Activated CD4-positive, alpha-beta memory T cell treated with anti-CD3 and anti-CD28 coated beads, Interleukin-2, amount 10 ng/mL, durations not matched to agents 7 days and 5 days (primary cell): ENCODE measurements at regions of chr14 and their contacts with region 1.

Region 1: GRCh38 chr14:24215495-24216344 is at the start of gene MDP1:
- DNase-seq: peak; percentile 92
- H3K4me3 Mint-ChIP-seq: peak within 1 kb of the TSS; percentile 88
- H3K27ac Mint-ChIP-seq: peak within 1 kb of the TSS; percentile 95
- H3K4me1 Mint-ChIP-seq: peaks cover 64% of the 10 kb centered on the region
- H3K27me3 Mint-ChIP-seq: no peaks in the 10 kb centered on the region
- total RNA-seq, gene MDP1: 13.5 to 17.0 TPM

Region 2: GRCh38 chr14:24141097-24141880 is 74.4 kb before region 1 on chr14 and contains the start of gene EMC9:
- CTCF ChIA-PET with region 1: interaction called, 5 read pairs
- POLR2A ChIA-PET with region 1: interaction called, 48 read pairs
- DNase-seq: peak; percentile 100
- H3K4me3 Mint-ChIP-seq: peak within 1 kb of the TSS; percentile 93
- H3K27ac Mint-ChIP-seq: peak within 1 kb of the TSS; percentile 92
- H3K4me1 Mint-ChIP-seq: peaks cover 73% of the 10 kb centered on the region
- H3K27me3 Mint-ChIP-seq: no peaks in the 10 kb centered on the region
- total RNA-seq, gene EMC9: 45.0 to 51.7 TPM

Region 3: DNA sequence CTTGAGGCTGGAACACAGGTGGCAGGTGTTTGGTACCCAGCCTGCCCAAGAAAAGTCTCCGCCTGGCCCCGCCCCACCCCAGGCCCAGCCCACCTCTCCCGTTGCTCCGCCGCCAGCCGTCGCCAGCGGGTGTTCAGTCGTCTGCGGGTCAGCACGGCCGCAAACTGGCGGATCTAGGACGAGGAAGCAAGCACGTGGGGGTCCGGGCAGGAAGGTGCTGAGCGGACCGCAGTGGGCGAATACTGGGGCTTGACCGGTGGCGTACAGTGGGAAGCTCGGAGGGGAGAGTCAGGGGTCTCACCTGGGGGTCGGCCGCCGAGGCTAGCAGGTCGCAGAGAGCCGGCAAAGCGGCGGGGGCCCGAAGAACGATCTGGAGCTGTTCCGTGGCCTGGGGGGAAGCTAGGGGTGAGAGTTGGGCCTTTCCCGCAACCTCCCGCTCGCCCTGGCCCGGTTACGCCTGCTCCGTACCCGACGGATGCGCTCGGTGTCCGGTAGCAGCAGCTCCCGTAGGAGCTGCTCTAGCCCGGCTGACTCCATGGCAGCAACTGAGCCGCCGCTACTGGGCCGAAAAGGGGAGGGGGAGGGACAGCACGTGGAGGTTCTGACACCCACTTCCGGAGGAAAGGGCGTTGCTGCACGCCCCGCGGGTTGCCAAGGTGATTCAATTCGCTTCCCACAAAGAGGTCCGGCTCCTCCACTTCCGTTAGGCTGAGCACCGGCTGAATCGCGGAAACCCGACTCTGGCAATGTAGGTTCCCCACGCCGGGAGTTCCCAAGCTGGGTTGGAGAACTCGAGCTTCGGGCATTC is 27.3 kb before region 1 on chr14 and contains the start of gene IPO4:
- CTCF ChIA-PET with region 1: interaction called, 9 read pairs
- POLR2A ChIA-PET with region 1: interaction called, 186 read pairs
- DNase-seq: peak; percentile 96
- H3K4me3 Mint-ChIP-seq: peak within 1 kb of the TSS; percentile 81
- H3K27ac Mint-ChIP-seq: peak within 1 kb of the TSS; percentile 79
- H3K4me1 Mint-ChIP-seq: peaks cover 59% of the 10 kb centered on the region
- H3K27me3 Mint-ChIP-seq: no peaks in the 10 kb centered on the region
- total RNA-seq, gene IPO4: 24.0 to 26.2 TPM

Region 4: DNA sequence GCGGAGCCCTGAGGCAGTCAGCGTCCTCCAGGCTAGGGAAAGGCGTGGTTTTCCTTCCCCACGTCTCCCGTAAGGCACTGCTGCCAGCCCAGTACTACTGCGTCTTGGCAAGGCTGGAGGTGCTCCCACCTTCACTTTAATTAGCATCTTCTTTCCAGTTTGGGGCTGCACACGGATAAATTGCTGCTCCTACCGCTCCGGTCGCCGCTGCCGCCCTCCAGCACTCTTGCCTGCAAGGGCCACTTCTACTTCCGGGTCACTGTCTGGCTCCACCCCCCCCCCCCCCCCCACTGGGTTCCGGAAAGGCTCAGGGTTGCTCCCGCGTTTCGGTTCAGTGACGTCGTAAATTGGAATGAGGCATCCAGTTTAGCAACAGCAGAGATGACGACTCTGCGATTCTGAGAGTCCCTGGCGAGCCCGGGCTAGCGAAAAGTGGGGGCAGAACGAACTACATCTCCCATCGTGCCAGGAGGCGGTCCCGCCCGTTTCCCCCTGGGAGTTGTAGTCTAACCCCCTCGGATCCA is 16.5 kb after region 1 on chr14 and contains the start of gene NEDD8:
- CTCF ChIA-PET with region 1: interaction called, 13 read pairs
- POLR2A ChIA-PET with region 1: interaction called, 136 read pairs
- DNase-seq: peak; percentile 92
- H3K4me3 Mint-ChIP-seq: peak within 1 kb of the TSS; percentile 81
- H3K27ac Mint-ChIP-seq: peak within 1 kb of the TSS; percentile 83
- H3K4me1 Mint-ChIP-seq: peaks cover 59% of the 10 kb centered on the region
- H3K27me3 Mint-ChIP-seq: no peaks in the 10 kb centered on the region
- total RNA-seq, gene NEDD8: 190 to 197 TPM

Region 5: GRCh38 chr14:24299255-24300195 is 83.8 kb after region 1 on chr14 and contains the starts of genes DHRS1 and NOP9:
- CTCF ChIA-PET with region 1: interaction called, 14 read pairs
- POLR2A ChIA-PET with region 1: interaction called, 25 read pairs
- DNase-seq: peak; percentile 94
- H3K4me3 Mint-ChIP-seq: peak within 1 kb of the TSS; percentile 84
- H3K27ac Mint-ChIP-seq: peak within 1 kb of the TSS; percentile 84
- H3K4me1 Mint-ChIP-seq: peaks cover 60% of the 10 kb centered on the region
- H3K27me3 Mint-ChIP-seq: no peaks in the 10 kb centered on the region
- total RNA-seq, gene DHRS1: 31.6 to 33.4 TPM
- total RNA-seq, gene NOP9: 25.8 to 27.7 TPM

Region 6: DNA sequence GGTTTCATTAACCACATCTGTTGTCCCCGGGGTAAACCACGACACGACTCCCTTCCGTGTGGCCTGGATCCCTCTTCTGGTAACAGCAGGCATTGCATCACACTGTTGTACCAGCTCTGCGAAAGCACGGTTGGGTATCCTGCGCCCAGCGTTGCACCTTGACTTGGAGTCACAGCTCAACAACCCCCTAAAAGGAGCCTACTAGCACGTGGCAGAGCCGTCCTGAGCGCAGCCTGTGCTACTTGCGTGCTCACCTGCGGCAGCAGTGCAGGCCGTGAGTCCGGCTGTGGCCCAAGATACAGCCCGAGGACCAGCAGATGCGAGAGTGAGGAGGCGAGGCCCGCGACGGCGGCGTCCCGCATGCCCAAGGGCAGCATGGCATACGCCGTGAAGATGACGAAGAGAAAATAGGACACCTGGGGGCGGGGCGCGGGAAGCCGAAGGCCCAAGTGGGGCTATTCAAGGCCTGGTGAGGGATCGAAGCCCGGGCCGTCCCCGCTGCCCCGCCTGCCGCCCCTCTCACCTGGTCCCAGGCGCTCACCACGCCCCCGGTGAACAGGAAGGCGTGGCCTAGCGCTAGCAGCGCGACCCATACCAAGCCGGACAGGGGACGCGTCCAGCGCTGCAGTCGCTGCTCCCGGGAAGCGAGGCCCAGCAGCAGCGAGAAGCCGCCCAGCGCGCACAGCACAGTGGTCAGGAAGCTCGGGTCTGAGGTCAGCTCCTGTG is 116.7 kb after region 1 on chr14:
- CTCF ChIA-PET with region 1: interaction called, 15 read pairs
- POLR2A ChIA-PET with region 1: interaction called, 5 read pairs
- DNase-seq: peak; percentile 89
- H3K4me3 Mint-ChIP-seq: peak overlapping the region; percentile 71
- H3K27ac Mint-ChIP-seq: peak overlapping the region; percentile 61
- H3K4me1 Mint-ChIP-seq: peaks cover 81% of the 10 kb centered on the region
- H3K27me3 Mint-ChIP-seq: peaks cover 35% of the 10 kb centered on the region

Region 7: GRCh38 chr14:24463017-24463883 is 247.5 kb after region 1 on chr14:
- CTCF ChIA-PET with region 1: no interaction called
- POLR2A ChIA-PET with region 1: no interaction called
- DNase-seq: no peak
- H3K4me3 Mint-ChIP-seq: no peak overlapping the region
- H3K27ac Mint-ChIP-seq: no peak overlapping the region
- H3K4me1 Mint-ChIP-seq: peaks cover 12% of the 10 kb centered on the region
- H3K27me3 Mint-ChIP-seq: no peaks in the 10 kb centered on the region